ENCODE measurements at regions of chr12 and their contacts with region 1.

Region 1: DNA sequence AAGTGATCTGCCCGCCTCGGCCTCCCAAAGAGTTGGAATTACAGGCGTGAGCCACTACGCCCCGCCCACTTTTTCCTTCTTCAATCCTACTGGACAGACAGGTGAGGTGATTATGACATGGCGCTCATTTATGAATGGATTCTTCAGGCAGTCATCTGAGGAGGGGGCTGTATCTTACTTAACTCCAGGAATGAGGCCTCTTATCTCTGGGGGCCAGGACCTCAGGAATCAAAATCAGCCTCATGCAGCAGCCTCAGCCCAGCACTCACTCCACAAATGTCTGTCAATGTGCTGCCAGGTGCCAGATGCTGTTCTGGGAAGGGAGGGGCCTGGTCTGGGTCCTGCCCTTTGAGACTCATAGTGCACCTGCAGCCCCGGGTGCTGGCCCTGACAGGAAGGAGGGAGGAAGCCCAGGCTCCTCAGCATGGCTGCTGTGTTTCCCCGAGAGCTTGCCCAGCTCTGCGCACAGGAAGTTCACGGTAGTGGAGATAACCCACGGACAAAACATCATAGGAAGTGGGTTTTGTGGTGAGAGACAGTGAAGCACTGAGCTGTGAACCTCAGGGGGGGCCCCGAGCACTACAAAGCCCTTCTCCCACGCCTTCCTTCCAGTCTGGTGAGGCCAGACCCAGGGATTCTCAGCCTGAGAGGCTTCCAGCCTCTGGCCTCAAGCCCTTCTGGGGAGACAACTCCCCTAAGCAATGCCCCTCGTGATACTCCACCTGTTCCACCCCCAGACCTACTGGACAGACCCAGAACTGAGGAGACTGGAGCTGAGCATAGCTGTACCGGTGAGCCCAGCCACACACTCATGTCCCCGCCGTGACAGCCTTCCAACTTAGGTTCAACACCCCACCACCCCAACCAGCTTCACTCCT is 22.3 kb downstream of the GALNT6 start:
- DNase-seq: peak; percentile 95
- H3K4me3 Mint-ChIP-seq: peak overlapping the region; percentile 23
- H3K27ac Mint-ChIP-seq: peak overlapping the region; percentile 78
- H3K4me1 Mint-ChIP-seq: peaks cover 56% of the 10 kb centered on the region
- H3K27me3 Mint-ChIP-seq: peaks cover 2% of the 10 kb centered on the region

Region 2: GRCh38 chr12:51351913-51352532 is 16.9 kb before region 1 on chr12:
- CTCF ChIA-PET with region 1: interaction called, 28 read pairs
- POLR2A ChIA-PET with region 1: no interaction called
- DNase-seq: peak; percentile 60
- H3K4me3 Mint-ChIP-seq: no peak overlapping the region
- H3K27ac Mint-ChIP-seq: no peak overlapping the region
- H3K4me1 Mint-ChIP-seq: no peaks in the 10 kb centered on the region
- H3K27me3 Mint-ChIP-seq: no peaks in the 10 kb centered on the region

Region 3: GRCh38 chr12:51357374-51358047 is 11.4 kb before region 1 on chr12:
- CTCF ChIA-PET with region 1: interaction called, 28 read pairs
- POLR2A ChIA-PET with region 1: no interaction called
- DNase-seq: no peak
- H3K4me3 Mint-ChIP-seq: no peak overlapping the region
- H3K27ac Mint-ChIP-seq: no peak overlapping the region
- H3K4me1 Mint-ChIP-seq: peaks cover 5% of the 10 kb centered on the region
- H3K27me3 Mint-ChIP-seq: no peaks in the 10 kb centered on the region

Measured in activated CD4-positive, alpha-beta T cell treated with anti-CD3 and anti-CD28 coated beads, Interleukin-2, amount 10 ng/mL, durations not matched to agents 7 days and 5 days (primary cell).